ENCODE measurements at regions of chr6 and their contacts with region 1.

Region 1: GRCh38 chr6:134990262-134990661 is 40.4 kb upstream of the ALDH8A1 start:
- DNase-seq: no peak
- ATAC-seq: no peak
- H3K4me3 ChIP-seq: no peak overlapping the region
- H3K27ac ChIP-seq: no peak overlapping the region
- H3K4me1 ChIP-seq: no peaks in the 10 kb centered on the region
- H3K27me3 ChIP-seq: no peaks in the 10 kb centered on the region
- CTCF ChIP-seq: no peak
- POLR2A ChIP-seq: no peak
- RAD21 ChIP-seq: no peak

Region 2: DNA sequence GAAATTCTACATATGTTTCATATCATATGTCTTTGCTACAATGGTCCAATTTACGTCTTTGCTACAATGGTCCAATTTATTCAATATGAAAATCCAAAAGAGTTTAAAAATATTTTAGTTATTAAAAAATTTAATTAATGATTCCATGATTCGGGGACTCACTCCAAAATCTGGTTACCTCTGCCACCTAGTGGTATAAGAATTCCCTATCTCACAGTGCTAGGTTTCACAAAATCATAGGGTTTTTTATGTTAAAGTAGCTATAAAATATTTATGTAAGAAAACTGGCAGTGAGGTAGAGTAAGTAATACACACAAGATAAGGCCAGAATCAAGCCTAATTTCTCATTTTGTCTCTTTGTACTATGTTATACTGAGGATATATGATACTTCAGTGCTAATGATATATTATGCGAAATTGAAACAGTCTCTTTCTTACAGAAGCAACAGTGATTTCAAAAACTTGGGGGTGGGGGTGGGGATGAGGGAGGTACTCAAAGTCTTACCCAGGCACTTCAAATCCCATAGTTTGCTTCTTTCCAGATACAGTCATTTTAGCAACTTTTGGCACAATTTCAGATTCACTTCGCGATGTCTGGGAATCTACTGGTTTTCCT is 12.1 kb after region 1 on chr6:
- CTCF ChIA-PET with region 1: interaction called, 13 read pairs
- POLR2A ChIA-PET with region 1: no interaction called
- RAD21 ChIA-PET with region 1: no interaction called
- intact Hi-C with region 1: no loop called
- DNase-seq: peak; percentile 4
- ATAC-seq: peak; percentile 58; the same call in 1 of the 2 replicates
- H3K4me3 ChIP-seq: no peak overlapping the region
- H3K27ac ChIP-seq: no peak overlapping the region
- H3K4me1 ChIP-seq: no peaks in the 10 kb centered on the region
- H3K27me3 ChIP-seq: no peaks in the 10 kb centered on the region
- CTCF ChIP-seq: peak; percentile 26 to 58 (median 52); a peak in 5 of 6 replicates
- POLR2A ChIP-seq: no peak
- RAD21 ChIP-seq: peak; percentile 41; the same call in 1 of the 2 replicates

Region 3: GRCh38 chr6:135030056-135030473 is 39.8 kb after region 1 on chr6:
- CTCF ChIA-PET with region 1: no interaction called
- POLR2A ChIA-PET with region 1: no interaction called
- RAD21 ChIA-PET with region 1: no interaction called
- intact Hi-C with region 1: no loop called
- DNase-seq: no peak
- ATAC-seq: no peak
- H3K4me3 ChIP-seq: no peak overlapping the region
- H3K27ac ChIP-seq: no peak overlapping the region
- H3K4me1 ChIP-seq: no peaks in the 10 kb centered on the region
- H3K27me3 ChIP-seq: no peaks in the 10 kb centered on the region
- CTCF ChIP-seq: no peak
- POLR2A ChIP-seq: no peak
- RAD21 ChIP-seq: no peak